WTC11 (cell line): ENCODE measurements at regions of chr9 and their contacts with region 1.

Region 1: GRCh38 chr9:32378993-32379729 is 5.3 kb upstream of the ACO1 start:
- DNase-seq: no peak
- ATAC-seq: peak; percentile 66
- H3K4me3 Mint-ChIP-seq: peak overlapping the region; percentile 30
- H3K27ac Mint-ChIP-seq: no peak overlapping the region
- H3K4me1 Mint-ChIP-seq: peaks cover 15% of the 10 kb centered on the region
- H3K27me3 Mint-ChIP-seq: peaks cover 31% of the 10 kb centered on the region
- CTCF ChIP-seq: peak; percentile 52; the same call in 1 of the 2 replicates

Region 2: GRCh38 chr9:32319312-32319929 is 59.7 kb before region 1 on chr9:
- CTCF ChIA-PET with region 1: no interaction called
- POLR2A ChIA-PET with region 1: no interaction called
- DNase-seq: no peak
- ATAC-seq: no peak
- H3K4me3 Mint-ChIP-seq: no peak overlapping the region
- H3K27ac Mint-ChIP-seq: no peak overlapping the region
- H3K4me1 Mint-ChIP-seq: peaks cover 11% of the 10 kb centered on the region
- H3K27me3 Mint-ChIP-seq: no peaks in the 10 kb centered on the region
- CTCF ChIP-seq: no peak

Region 3: DNA sequence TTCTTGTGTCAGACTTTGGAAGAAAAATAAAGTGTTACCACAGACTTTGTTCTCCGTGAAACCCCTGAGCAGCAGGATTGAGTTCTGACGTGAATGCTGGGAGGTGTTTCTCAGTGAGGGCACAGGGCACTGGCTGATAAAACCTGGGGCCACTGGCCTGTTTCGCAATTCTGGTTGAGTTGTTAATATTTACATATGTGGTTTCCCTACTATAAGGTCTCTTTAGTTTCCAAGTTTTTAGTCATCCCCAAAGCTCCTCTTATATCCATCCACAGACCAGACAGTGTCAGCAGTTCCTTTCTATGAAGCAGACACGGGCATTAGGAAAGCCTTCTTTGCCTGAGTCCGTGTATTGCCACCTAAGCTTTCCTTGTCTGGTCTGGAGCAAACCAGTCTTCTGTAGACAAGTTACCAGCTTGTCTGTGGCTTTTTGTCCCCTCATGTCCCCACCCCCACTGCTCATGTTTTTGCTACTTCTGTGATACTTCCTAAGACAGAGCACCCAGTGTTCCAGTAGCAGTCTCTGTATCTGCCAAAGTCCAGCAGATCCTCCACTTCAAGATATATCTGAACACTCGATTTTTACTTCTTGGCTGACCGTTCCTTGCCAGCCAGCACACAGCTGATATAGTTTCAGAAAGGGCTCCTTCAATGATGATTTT is 47.2 kb after region 1 on chr9:
- CTCF ChIA-PET with region 1: interaction called, 56 read pairs
- POLR2A ChIA-PET with region 1: no interaction called
- DNase-seq: no peak
- ATAC-seq: no peak
- H3K4me3 Mint-ChIP-seq: no peak overlapping the region
- H3K27ac Mint-ChIP-seq: no peak overlapping the region
- H3K4me1 Mint-ChIP-seq: no peaks in the 10 kb centered on the region
- H3K27me3 Mint-ChIP-seq: no peaks in the 10 kb centered on the region
- CTCF ChIP-seq: no peak

Region 4: GRCh38 chr9:32526041-32526706 is 147.0 kb after region 1 on chr9 and contains the start of gene RIGI:
- CTCF ChIA-PET with region 1: interaction called, 94 read pairs
- POLR2A ChIA-PET with region 1: interaction called, 5 read pairs
- DNase-seq: peak; percentile 83
- ATAC-seq: peak; percentile 84
- H3K4me3 Mint-ChIP-seq: peak within 1 kb of the TSS; percentile 82
- H3K27ac Mint-ChIP-seq: peak within 1 kb of the TSS; percentile 97
- H3K4me1 Mint-ChIP-seq: peaks cover 14% of the 10 kb centered on the region
- H3K27me3 Mint-ChIP-seq: no peaks in the 10 kb centered on the region
- CTCF ChIP-seq: peak; percentile 41; the same call in 1 of the 2 replicates
- total RNA-seq, gene RIGI: 6.0 to 7.5 TPM (median 6.2 TPM) in 3 replicates

Region 5: DNA sequence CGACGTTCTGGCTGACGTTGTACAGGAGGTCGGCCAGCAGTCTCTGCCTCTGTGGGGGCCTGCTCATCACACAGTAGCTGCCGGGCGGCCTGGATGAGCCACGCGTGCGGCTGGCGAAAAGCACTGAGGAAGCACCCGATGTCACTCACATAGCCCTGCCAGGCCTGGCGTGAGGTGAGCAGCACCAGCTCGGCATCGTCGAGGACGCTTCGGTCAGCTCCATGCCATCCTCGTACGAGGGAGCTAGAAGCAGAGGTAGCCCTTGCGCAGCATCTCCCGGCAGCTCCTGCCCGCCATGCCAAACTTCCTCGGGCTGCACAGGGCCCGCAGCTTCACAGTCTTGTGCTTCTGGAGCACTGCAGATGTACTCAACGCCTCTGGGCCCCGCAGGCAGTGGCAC is 187.6 kb after region 1 on chr9:
- CTCF ChIA-PET with region 1: interaction called, 109 read pairs
- POLR2A ChIA-PET with region 1: interaction called, 5 read pairs
- DNase-seq: no peak
- ATAC-seq: no peak
- H3K4me3 Mint-ChIP-seq: no peak overlapping the region
- H3K27ac Mint-ChIP-seq: no peak overlapping the region
- H3K4me1 Mint-ChIP-seq: peaks cover 2% of the 10 kb centered on the region; the same call in 1 of the 2 replicates
- H3K27me3 Mint-ChIP-seq: no peaks in the 10 kb centered on the region
- CTCF ChIP-seq: no peak

Region 6: DNA sequence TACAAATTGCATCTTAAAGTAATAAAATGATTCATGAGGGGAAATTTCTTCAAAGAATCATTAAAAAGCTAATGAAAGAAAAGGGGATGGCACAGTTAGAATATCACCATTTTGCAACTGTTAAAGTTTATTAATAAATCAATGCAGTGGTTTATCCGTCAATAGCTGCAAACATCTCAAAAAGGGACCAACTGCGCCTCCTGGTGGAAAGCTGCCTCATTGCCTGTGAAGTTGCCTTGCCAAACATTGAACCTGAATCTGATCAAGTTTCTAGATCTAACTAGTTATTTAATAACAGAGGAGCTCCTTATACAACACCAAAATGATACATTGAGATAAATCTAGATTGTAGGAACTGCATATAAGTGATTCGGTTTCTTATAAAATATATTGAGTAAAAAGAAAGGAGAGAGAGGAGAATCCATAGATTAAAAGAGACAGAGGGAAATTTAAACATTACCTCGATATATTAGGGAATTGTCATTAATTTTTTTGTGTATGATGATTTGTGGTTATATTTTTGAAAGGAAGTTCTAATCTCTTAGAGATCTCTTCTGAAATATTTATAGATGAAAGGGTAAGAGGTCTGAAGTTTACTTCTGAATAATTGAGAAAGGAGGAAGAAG is 200.7 kb after region 1 on chr9:
- CTCF ChIA-PET with region 1: interaction called, 245 read pairs
- POLR2A ChIA-PET with region 1: interaction called, 3 read pairs
- DNase-seq: peak; percentile 76
- ATAC-seq: no peak
- H3K4me3 Mint-ChIP-seq: no peak overlapping the region
- H3K27ac Mint-ChIP-seq: no peak overlapping the region
- H3K4me1 Mint-ChIP-seq: peaks cover 11% of the 10 kb centered on the region
- H3K27me3 Mint-ChIP-seq: no peaks in the 10 kb centered on the region
- CTCF ChIP-seq: peak; percentile 85

Region 7: DNA sequence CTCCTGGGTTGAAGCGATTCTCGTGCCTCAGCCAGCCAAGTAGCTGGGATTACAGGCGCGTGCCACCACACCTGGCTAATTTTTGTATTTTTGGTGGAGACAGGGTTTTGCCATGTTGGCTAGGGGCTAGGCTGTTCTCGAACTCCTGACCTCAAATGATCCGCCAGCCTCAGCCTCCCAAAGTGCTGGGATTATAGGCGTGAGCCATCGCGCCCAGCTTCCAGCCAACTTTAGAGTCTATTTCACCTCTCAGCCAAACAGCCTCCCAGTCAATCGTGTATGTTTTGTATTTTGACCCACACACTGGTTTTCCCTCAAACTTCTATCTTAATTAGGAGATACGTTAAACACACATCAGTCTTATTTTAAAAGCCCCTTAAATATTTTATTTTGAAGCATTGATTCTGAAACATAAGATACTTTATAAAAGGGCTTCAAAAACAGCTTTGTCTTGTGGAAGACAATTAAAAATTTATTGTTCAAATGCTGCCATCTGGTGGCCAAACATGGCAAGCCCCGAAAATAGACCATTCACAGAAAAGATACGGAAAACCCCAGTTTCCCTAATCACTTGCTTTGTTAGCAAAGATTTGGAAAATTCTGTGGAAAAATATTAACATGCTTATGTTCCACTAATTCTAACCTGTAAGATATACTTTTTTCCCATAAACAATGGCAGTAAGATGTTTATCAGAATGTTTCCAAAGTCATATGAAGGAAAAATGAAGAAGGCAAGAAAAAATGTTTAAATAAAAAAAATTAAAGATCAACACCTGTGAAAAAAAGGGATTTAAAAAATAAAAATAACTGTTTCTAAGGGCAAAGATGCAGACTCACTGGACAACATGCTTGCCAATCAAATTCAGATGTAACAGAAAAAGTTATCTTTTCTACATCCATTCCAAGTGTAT is 589.2 kb after region 1 on chr9:
- CTCF ChIA-PET with region 1: interaction called, 21 read pairs
- POLR2A ChIA-PET with region 1: no interaction called
- DNase-seq: peak; percentile 62
- ATAC-seq: no peak
- H3K4me3 Mint-ChIP-seq: no peak overlapping the region
- H3K27ac Mint-ChIP-seq: no peak overlapping the region
- H3K4me1 Mint-ChIP-seq: peaks cover 2% of the 10 kb centered on the region
- H3K27me3 Mint-ChIP-seq: no peaks in the 10 kb centered on the region
- CTCF ChIP-seq: peak; percentile 66